GM12878 (cell line): ENCODE measurements at regions of chr7 and their contacts with region 1.

Region 1: GRCh38 chr7:139602143-139602722 is 78.7 kb downstream of the CLEC2L start:
- DNase-seq: no peak
- ATAC-seq: peak; percentile 87
- H3K4me3 ChIP-seq: no peak overlapping the region
- H3K27ac ChIP-seq: no peak overlapping the region
- H3K4me1 ChIP-seq: no peaks in the 10 kb centered on the region
- H3K27me3 ChIP-seq: no peaks in the 10 kb centered on the region
- CTCF ChIP-seq: peak; percentile 41 to 59 (median 57)
- EP300 ChIP-seq: no peak
- POLR2A ChIP-seq: no peak
- RAD21 ChIP-seq: peak; percentile 56

Region 2: GRCh38 chr7:139403601-139404000 is 198.6 kb before region 1 on chr7:
- CTCF ChIA-PET with region 1: no interaction called
- POLR2A ChIA-PET with region 1: no interaction called
- RAD21 ChIA-PET with region 1: no interaction called
- SMC1A ChIA-PET with region 1: no interaction called
- in situ Hi-C with region 1: no loop called
- intact Hi-C with region 1: no loop called
- DNase-seq: no peak
- ATAC-seq: no peak
- H3K4me3 ChIP-seq: no peak overlapping the region
- H3K27ac ChIP-seq: no peak overlapping the region
- H3K4me1 ChIP-seq: no peaks in the 10 kb centered on the region
- H3K27me3 ChIP-seq: no peaks in the 10 kb centered on the region
- CTCF ChIP-seq: no peak
- EP300 ChIP-seq: no peak
- POLR2A ChIP-seq: 0 out of 2 replicates have a peak, but pooled peaks have one; percentile 17
- RAD21 ChIP-seq: no peak

Region 3: GRCh38 chr7:139431010-139431409 is 171.2 kb before region 1 on chr7:
- CTCF ChIA-PET with region 1: interaction called, 10 read pairs
- POLR2A ChIA-PET with region 1: no interaction called
- RAD21 ChIA-PET with region 1: interaction called, 8 read pairs
- SMC1A ChIA-PET with region 1: interaction called, 9 read pairs
- in situ Hi-C with region 1: no loop called
- intact Hi-C with region 1: no loop called
- DNase-seq: no peak
- ATAC-seq: no peak
- H3K4me3 ChIP-seq: no peak overlapping the region
- H3K27ac ChIP-seq: no peak overlapping the region
- H3K4me1 ChIP-seq: no peaks in the 10 kb centered on the region
- H3K27me3 ChIP-seq: no peaks in the 10 kb centered on the region
- CTCF ChIP-seq: no peak
- EP300 ChIP-seq: no peak
- POLR2A ChIP-seq: no peak
- RAD21 ChIP-seq: no peak

Region 4: DNA sequence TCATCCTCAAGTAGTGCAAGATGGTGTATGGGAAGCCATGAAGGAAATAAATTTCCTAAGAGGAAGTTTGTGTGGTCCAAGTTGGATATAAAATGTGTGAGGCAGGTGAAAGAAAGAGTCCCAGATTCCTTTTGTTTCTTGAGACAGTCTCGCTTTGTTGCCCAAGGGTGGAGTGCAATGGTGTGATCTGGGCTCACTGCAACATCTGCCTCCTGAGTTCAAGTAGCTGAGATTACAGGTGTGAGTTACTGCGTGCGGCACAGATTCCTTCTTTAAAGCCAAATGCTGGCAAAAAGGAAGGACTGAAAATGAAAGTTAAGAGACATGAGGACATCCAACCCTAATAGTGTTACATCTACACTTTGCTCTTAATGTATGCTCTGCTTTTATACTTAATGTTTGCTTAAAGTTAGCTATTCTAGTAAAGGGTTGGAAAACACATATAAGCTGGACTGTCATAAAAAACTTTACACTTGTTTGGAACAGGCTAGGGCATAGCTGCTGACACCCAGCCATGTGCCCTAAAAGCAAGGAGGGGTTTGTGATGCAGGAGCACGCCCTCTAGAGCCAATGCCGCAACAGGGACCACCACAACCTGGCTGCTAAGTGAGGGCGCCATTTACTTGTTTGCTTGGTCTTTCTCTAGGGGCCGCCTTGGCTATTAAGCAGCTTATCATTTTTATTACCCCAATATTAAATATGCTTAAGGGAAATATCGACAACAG is 44.2 kb before region 1 on chr7:
- CTCF ChIA-PET with region 1: interaction called, 10 read pairs
- POLR2A ChIA-PET with region 1: no interaction called
- RAD21 ChIA-PET with region 1: no interaction called
- SMC1A ChIA-PET with region 1: no interaction called
- in situ Hi-C with region 1: no loop called
- intact Hi-C with region 1: no loop called
- DNase-seq: no peak
- ATAC-seq: no peak
- H3K4me3 ChIP-seq: no peak overlapping the region
- H3K27ac ChIP-seq: no peak overlapping the region
- H3K4me1 ChIP-seq: no peaks in the 10 kb centered on the region
- H3K27me3 ChIP-seq: no peaks in the 10 kb centered on the region
- CTCF ChIP-seq: no peak
- EP300 ChIP-seq: no peak
- POLR2A ChIP-seq: no peak
- RAD21 ChIP-seq: no peak

Region 5: GRCh38 chr7:139588632-139589031 is 13.6 kb before region 1 on chr7:
- CTCF ChIA-PET with region 1: interaction called, 51 read pairs
- POLR2A ChIA-PET with region 1: no interaction called
- RAD21 ChIA-PET with region 1: interaction called, 5 read pairs
- SMC1A ChIA-PET with region 1: interaction called, 6 read pairs
- in situ Hi-C with region 1: no loop called
- intact Hi-C with region 1: no loop called
- DNase-seq: no peak
- ATAC-seq: no peak
- H3K4me3 ChIP-seq: no peak overlapping the region
- H3K27ac ChIP-seq: no peak overlapping the region
- H3K4me1 ChIP-seq: no peaks in the 10 kb centered on the region
- H3K27me3 ChIP-seq: no peaks in the 10 kb centered on the region
- CTCF ChIP-seq: no peak
- EP300 ChIP-seq: no peak
- POLR2A ChIP-seq: no peak
- RAD21 ChIP-seq: no peak

Region 6: GRCh38 chr7:139620676-139621344 is 18.6 kb after region 1 on chr7:
- CTCF ChIA-PET with region 1: interaction called, 43 read pairs
- POLR2A ChIA-PET with region 1: no interaction called
- RAD21 ChIA-PET with region 1: interaction called, 8 read pairs
- SMC1A ChIA-PET with region 1: interaction called, 5 read pairs
- in situ Hi-C with region 1: no loop called
- intact Hi-C with region 1: no loop called
- DNase-seq: no peak
- ATAC-seq: peak; percentile 96
- H3K4me3 ChIP-seq: no peak overlapping the region
- H3K27ac ChIP-seq: no peak overlapping the region
- H3K4me1 ChIP-seq: no peaks in the 10 kb centered on the region
- H3K27me3 ChIP-seq: no peaks in the 10 kb centered on the region
- CTCF ChIP-seq: peak; percentile 54 to 84 (median 83)
- EP300 ChIP-seq: no peak
- POLR2A ChIP-seq: no peak
- RAD21 ChIP-seq: peak; percentile 67

Region 7: DNA sequence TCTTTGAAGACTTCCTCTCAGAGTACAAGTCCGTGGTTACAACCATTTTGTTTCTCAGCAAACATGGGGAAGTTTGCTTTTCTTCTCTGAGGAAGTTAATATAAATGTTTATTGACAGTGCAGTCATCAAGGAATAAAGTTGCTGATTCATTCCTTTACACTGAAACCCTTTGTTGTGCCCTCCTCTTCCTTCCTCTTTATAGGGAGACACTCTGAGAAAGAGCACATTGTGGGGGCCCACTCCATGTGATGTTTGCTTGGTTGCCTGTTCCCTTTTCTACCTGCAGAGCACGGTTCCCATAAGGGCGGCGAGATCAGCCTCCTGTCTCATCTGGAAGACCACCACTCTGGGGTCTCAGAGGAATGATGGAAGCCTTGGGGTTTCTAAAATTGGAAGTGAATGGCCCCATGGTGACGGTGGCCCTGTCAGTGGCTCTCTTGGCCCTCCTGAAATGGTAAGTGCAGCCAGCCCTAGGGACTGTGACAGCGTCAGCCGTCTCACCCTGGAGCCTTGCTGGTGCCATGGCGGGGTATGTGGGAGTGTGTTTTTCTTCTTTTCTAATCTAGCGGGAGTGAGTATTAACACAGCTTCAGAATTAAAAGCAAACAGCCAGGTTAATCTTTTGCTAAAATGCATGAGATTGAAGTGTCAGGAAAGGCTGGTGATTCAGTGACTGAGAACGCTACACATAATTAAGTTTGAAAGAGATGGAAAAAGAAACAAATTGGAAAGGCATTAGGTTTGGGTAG is 227.0 kb after region 1 on chr7 and contains the start of gene TBXAS1:
- CTCF ChIA-PET with region 1: interaction called, 14 read pairs
- POLR2A ChIA-PET with region 1: no interaction called
- RAD21 ChIA-PET with region 1: no interaction called
- SMC1A ChIA-PET with region 1: interaction called, 4 read pairs
- in situ Hi-C with region 1: no loop called
- intact Hi-C with region 1: no loop called
- DNase-seq: no peak
- ATAC-seq: peak; percentile 74
- H3K4me3 ChIP-seq: peak within 1 kb of the TSS; percentile 54
- H3K27ac ChIP-seq: peak within 1 kb of the TSS; percentile 81
- H3K4me1 ChIP-seq: peaks cover 26% of the 10 kb centered on the region
- H3K27me3 ChIP-seq: peaks cover 0 to 1% of the 10 kb centered on the region in 2 experiments; a peak in 1 of 4 replicates
- CTCF ChIP-seq: no peak
- EP300 ChIP-seq: no peak
- POLR2A ChIP-seq: peak; percentile 63; the same call in 1 of the 2 replicates
- RAD21 ChIP-seq: no peak
- polyA plus RNA-seq, gene TBXAS1: 6.8 to 8.3 TPM